Naive thymus-derived CD4-positive, alpha-beta T cell (primary cell): ENCODE measurements at regions of chr1 and their contacts with region 1.

Region 1: GRCh38 chr1:207828485-207829158 is 76.8 kb downstream of the CD46 start:
- DNase-seq: peak; percentile 39 to 69 (median 57)
- ATAC-seq: peak; percentile 40
- H3K4me3 ChIP-seq: no peak overlapping the region
- H3K4me3 Mint-ChIP-seq: peak overlapping the region in 3 of 10 donors; percentile 1 to 21 (median 9)
- H3K27ac ChIP-seq: peak overlapping the region; percentile 26
- H3K27ac Mint-ChIP-seq: peak overlapping the region; percentile 43 to 100 (median 96)
- H3K4me1 ChIP-seq: peaks cover 36 to 75% of the 10 kb centered on the region in 2 donors
- H3K4me1 Mint-ChIP-seq: peaks cover 82 to 99% (median 97%) of the 10 kb centered on the region in 7 donors
- H3K27me3 ChIP-seq: no peaks in the 10 kb centered on the region
- H3K27me3 Mint-ChIP-seq: peaks cover 0 to 5% (median 0%) of the 10 kb centered on the region in 5 donors

Region 2: DNA sequence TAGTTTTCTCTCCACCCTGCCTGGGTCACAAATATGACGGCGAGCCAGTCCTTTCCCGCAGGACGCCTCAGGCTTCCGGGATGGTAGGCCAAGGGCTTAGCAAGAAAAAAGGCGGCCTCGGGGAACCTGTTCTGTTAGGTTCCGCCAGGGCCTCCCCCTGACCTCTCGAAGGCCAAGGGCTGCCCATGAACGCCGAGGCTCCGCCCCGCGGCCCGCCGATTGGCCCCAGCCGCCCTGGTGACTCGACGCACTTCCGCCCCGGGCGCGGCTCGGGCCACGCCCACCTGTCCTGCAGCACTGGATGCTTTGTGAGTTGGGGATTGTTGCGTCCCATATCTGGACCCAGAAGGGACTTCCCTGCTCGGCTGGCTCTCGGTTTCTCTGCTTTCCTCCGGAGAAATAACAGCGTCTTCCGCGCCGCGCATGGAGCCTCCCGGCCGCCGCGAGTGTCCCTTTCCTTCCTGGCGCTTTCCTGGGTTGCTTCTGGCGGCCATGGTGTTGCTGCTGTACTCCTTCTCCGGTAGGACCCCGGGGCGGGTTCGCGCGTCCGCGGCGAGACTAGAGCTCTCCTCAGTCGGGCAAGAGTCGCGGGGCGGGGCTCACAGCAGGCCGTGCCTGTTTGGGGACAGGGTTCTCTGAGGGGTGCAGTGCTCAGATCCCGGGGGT is 76.7 kb before region 1 on chr1 and contains the start of gene CD46:
- CTCF ChIA-PET with region 1: no interaction called
- POLR2A ChIA-PET with region 1: interaction called, 6 read pairs
- intact Hi-C with region 1: loop called (anchors 1 to 2 kb)
- DNase-seq: peak; percentile 88 to 95 (median 90)
- ATAC-seq: peak; percentile 99
- H3K4me3 ChIP-seq: peak within 1 kb of the TSS; percentile 92
- H3K4me3 Mint-ChIP-seq: peak within 1 kb of the TSS; percentile 94 to 100 (median 99)
- H3K27ac ChIP-seq: peak within 1 kb of the TSS; percentile 90
- H3K27ac Mint-ChIP-seq: peak within 1 kb of the TSS; percentile 96 to 99 (median 97)
- H3K4me1 ChIP-seq: peaks cover 27 to 50% of the 10 kb centered on the region in 2 donors
- H3K4me1 Mint-ChIP-seq: peaks cover 49 to 93% (median 86%) of the 10 kb centered on the region in 7 donors
- H3K27me3 ChIP-seq: no peaks in the 10 kb centered on the region
- H3K27me3 Mint-ChIP-seq: peaks cover 0 to under 1% (median 0%) of the 10 kb centered on the region in 5 donors
- total RNA-seq, gene CD46: 121 to 216 (median 127) TPM

Region 3: DNA sequence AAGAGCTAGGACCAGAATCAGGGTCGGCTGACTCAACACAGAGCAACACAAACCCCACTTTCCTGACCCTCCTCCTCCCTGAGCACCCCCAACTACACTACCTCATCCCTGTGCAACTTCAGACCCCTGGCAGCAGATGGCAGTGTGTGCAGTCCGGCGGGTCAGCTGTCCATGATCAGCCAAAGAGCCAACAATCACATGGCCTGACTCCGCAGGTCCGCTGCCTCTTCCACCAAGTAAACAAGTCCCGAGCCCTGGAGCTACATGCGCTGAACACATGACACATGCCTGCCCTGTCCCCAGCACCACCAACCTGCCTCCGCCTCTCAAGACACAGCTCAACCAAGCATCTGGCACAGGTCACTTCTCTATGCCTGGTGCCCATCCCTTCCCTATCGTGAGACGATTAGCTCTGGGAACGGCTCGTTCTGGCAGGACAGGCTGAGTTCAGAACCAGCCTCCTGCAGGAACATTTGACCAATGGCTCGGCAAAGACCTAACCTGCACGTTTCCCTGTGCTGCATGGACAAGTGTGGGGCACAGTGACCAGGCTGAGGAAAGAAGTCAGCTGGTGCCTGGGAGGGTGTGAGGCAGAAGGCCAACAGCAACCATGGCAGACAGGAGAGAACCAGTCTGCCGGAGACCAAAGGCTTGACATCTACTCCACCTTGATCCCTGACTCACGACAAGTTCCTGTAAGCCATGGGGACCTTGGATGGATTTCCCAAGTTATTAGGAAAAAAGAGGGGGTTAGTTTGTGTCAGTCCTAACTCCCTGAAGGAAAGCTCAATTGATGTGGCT is 16.5 kb before region 1 on chr1:
- CTCF ChIA-PET with region 1: interaction called, 6 read pairs
- POLR2A ChIA-PET with region 1: interaction called, 23 read pairs
- intact Hi-C with region 1: no loop called
- DNase-seq: peak in 1 of 9 donors; percentile 20
- ATAC-seq: peak; percentile 34
- H3K4me3 ChIP-seq: no peak overlapping the region
- H3K4me3 Mint-ChIP-seq: peak overlapping the region in 1 of 10 donors; percentile 49
- H3K27ac ChIP-seq: no peak overlapping the region
- H3K27ac Mint-ChIP-seq: peak overlapping the region in 7 of 9 donors; percentile 29 to 91 (median 72)
- H3K4me1 ChIP-seq: peaks cover 13 to 28% of the 10 kb centered on the region in 2 donors
- H3K4me1 Mint-ChIP-seq: peaks cover 56 to 94% (median 91%) of the 10 kb centered on the region in 7 donors
- H3K27me3 ChIP-seq: no peaks in the 10 kb centered on the region
- H3K27me3 Mint-ChIP-seq: no peaks in the 10 kb centered on the region

Region 4: GRCh38 chr1:207848234-207848633 is 19.6 kb after region 1 on chr1:
- CTCF ChIA-PET with region 1: interaction called, 14 read pairs
- POLR2A ChIA-PET with region 1: interaction called, 9 read pairs
- intact Hi-C with region 1: loop called (anchors 2 kb)
- DNase-seq: peak in 1 of 9 donors; percentile 55
- ATAC-seq: peak; percentile 86
- H3K4me3 ChIP-seq: no peak overlapping the region
- H3K4me3 Mint-ChIP-seq: peak overlapping the region; percentile 39 to 84 (median 62)
- H3K27ac ChIP-seq: peak overlapping the region; percentile 27
- H3K27ac Mint-ChIP-seq: peak overlapping the region in 8 of 9 donors; percentile 5 to 88 (median 66)
- H3K4me1 ChIP-seq: peaks cover 43 to 69% of the 10 kb centered on the region in 2 donors
- H3K4me1 Mint-ChIP-seq: peaks cover 72 to 97% (median 92%) of the 10 kb centered on the region in 7 donors
- H3K27me3 ChIP-seq: no peaks in the 10 kb centered on the region
- H3K27me3 Mint-ChIP-seq: no peaks in the 10 kb centered on the region

Region 5: DNA sequence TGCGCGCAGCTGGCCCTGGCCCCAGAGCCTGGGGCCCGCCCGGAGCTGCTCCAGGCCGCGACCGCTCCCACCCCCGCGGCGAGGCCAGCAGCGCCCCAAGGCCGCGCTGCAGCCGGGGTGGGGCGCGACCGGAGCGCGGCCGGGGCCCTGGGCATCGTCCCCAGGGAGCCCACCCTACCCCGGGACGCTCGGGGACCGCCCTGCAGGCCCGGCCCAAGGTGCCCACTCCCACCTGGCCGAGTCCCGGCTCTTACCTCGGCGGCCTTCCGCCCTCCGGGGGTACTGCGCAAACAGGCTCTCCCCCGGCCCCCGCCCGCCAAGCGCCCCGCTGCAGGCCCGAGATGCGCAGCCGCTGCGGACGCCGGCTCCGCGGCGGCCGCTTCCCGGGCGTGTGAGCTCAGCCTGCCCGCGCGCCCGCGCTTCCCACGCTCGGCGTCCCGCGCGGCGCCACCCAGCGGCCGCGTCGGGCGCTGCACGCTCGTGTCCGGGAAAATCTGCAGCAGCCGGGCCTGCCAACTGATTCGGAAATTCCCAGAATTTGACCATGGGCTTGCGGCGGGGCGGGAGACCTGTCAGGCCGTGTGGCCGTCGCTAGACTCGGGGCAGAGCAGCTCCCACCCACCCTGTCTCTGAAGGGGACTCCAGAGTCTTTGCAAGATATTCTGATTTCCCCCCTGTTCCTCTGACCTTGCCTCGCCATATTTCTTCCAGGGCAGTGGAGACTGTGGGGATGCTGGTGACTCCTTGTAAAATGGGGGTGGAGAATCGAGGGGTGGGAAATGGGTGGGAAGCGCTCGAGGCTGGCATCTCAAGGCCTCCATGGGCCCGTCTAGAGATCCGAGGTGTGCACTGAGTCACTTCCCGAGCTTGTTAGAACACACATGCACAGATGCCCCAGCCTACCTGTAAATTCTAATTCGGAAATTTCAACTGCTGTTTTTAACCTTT is 40.4 kb after region 1 on chr1:
- CTCF ChIA-PET with region 1: interaction called, 145 read pairs
- POLR2A ChIA-PET with region 1: interaction called, 547 read pairs
- intact Hi-C with region 1: loop called (anchors 1 kb)
- DNase-seq: peak; percentile 57 to 86 (median 79)
- ATAC-seq: peak; percentile 79
- H3K4me3 ChIP-seq: peak overlapping the region; percentile 86
- H3K4me3 Mint-ChIP-seq: peak overlapping the region; percentile 74 to 99 (median 94)
- H3K27ac ChIP-seq: peak overlapping the region; percentile 78
- H3K27ac Mint-ChIP-seq: peak overlapping the region; percentile 91 to 98 (median 93)
- H3K4me1 ChIP-seq: peaks cover 39 to 80% of the 10 kb centered on the region in 2 donors
- H3K4me1 Mint-ChIP-seq: peaks cover 52 to 85% (median 77%) of the 10 kb centered on the region in 7 donors
- H3K27me3 ChIP-seq: no peaks in the 10 kb centered on the region
- H3K27me3 Mint-ChIP-seq: no peaks in the 10 kb centered on the region

Region 6: DNA sequence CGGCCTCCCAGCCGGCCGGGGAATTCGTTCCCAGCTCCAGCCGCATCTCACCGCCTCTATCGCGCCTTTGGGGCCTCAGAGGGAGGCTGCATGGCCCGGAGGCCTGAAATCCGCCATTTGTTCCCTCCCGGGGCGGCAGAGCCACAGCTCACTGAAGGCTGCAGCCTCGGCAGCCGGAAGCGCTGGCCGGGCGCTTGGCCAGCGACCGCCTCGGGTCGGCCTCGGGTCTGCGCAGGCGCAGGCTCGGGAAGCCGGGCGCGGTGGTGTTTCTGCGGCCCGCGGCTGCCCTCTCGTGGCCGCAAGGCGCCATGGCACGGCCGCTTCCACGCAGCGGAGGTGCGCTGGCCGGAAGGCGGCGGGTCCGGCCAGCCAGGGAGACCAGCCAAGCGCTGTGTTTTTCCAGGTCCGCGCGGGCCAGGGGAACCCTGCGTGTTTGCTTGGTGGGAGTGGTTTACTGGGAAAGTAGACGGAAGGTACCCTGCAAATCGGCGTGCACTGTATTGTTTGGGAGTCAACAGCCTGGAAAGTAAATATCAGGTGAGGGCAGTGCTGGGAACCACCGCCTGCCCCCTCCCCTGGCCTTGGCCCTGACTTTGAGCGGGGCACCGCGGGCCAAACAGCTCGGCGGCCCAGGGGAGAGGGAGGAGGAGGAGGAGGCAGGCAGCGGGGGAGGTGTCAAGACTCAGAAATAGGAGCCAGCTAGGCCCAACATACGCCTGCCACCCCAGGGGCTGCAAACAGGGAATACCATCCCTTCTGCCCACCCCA is 135.0 kb after region 1 on chr1:
- CTCF ChIA-PET with region 1: interaction called, 47 read pairs
- POLR2A ChIA-PET with region 1: interaction called, 15 read pairs
- intact Hi-C with region 1: loop called (anchors 1 kb)
- DNase-seq: peak; percentile 61 to 94 (median 80)
- ATAC-seq: peak; percentile 95
- H3K4me3 ChIP-seq: peak overlapping the region; percentile 87
- H3K4me3 Mint-ChIP-seq: peak overlapping the region; percentile 78 to 92 (median 84)
- H3K27ac ChIP-seq: peak overlapping the region; percentile 63
- H3K27ac Mint-ChIP-seq: peak overlapping the region in 8 of 9 donors; percentile 12 to 83 (median 68)
- H3K4me1 ChIP-seq: peaks cover 3 to 5% of the 10 kb centered on the region in 2 donors
- H3K4me1 Mint-ChIP-seq: peaks cover 6 to 15% (median 9%) of the 10 kb centered on the region in 7 donors
- H3K27me3 ChIP-seq: peaks cover 0 to 7% of the 10 kb centered on the region in 2 donors
- H3K27me3 Mint-ChIP-seq: peaks cover 10 to 50% (median 22%) of the 10 kb centered on the region in 5 donors